ENCODE measurements at regions of chr12 and their contacts with region 1.

Region 1: GRCh38 chr12:93802698-93803423 is 125.7 kb downstream of the CRADD start:
- DNase-seq: no peak
- ATAC-seq: no peak; the same call in 1 of the 2 replicates
- H3K4me3 Mint-ChIP-seq: no peak overlapping the region
- H3K27ac Mint-ChIP-seq: no peak overlapping the region
- H3K4me1 Mint-ChIP-seq: peaks cover 30% of the 10 kb centered on the region
- H3K27me3 Mint-ChIP-seq: no peaks in the 10 kb centered on the region
- CTCF ChIP-seq: no peak

Region 2: GRCh38 chr12:93577222-93577795 is 225.6 kb before region 1 on chr12:
- CTCF ChIA-PET with region 1: no interaction called
- POLR2A ChIA-PET with region 1: no interaction called
- DNase-seq: no peak
- ATAC-seq: no peak
- H3K4me3 Mint-ChIP-seq: no peak overlapping the region
- H3K27ac Mint-ChIP-seq: peak overlapping the region; percentile 40; the same call in 1 of the 2 replicates
- H3K4me1 Mint-ChIP-seq: peaks cover 62% of the 10 kb centered on the region
- H3K27me3 Mint-ChIP-seq: peaks cover 30% of the 10 kb centered on the region
- CTCF ChIP-seq: no peak

Region 3: GRCh38 chr12:93773122-93773871 is 29.6 kb before region 1 on chr12:
- CTCF ChIA-PET with region 1: no interaction called
- POLR2A ChIA-PET with region 1: no interaction called
- DNase-seq: no peak
- ATAC-seq: no peak
- H3K4me3 Mint-ChIP-seq: no peak overlapping the region
- H3K27ac Mint-ChIP-seq: no peak overlapping the region
- H3K4me1 Mint-ChIP-seq: peaks cover 29% of the 10 kb centered on the region
- H3K27me3 Mint-ChIP-seq: no peaks in the 10 kb centered on the region
- CTCF ChIP-seq: no peak

Region 4: GRCh38 chr12:93825931-93826555 is 23.2 kb after region 1 on chr12:
- CTCF ChIA-PET with region 1: no interaction called
- POLR2A ChIA-PET with region 1: no interaction called
- DNase-seq: no peak
- ATAC-seq: no peak
- H3K4me3 Mint-ChIP-seq: no peak overlapping the region
- H3K27ac Mint-ChIP-seq: no peak overlapping the region
- H3K4me1 Mint-ChIP-seq: peaks cover 10% of the 10 kb centered on the region; the same call in 1 of the 2 replicates
- H3K27me3 Mint-ChIP-seq: peaks cover 10% of the 10 kb centered on the region
- CTCF ChIP-seq: no peak

Region 5: DNA sequence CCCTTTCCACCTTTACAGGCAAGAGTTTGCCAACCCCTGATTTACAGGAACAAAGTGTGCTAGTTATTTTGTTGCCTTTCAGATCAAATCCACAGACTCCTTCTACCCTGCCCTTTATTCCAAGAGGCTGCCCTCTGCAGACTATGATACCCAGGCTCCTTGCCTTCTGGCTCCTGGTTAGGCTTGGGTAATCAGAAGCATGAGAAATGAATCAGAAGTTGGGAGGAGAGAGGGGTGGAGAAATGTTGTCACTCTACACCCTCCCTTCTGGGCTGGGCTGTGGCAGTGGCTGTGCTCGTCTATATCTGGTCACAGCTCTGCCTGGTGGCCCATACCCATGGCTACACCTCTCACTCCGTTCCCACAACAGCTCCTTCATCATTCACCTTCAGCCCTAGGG is 140.9 kb after region 1 on chr12:
- CTCF ChIA-PET with region 1: no interaction called
- POLR2A ChIA-PET with region 1: no interaction called
- DNase-seq: no peak
- ATAC-seq: peak; percentile 36; the same call in 1 of the 2 replicates
- H3K4me3 Mint-ChIP-seq: no peak overlapping the region
- H3K27ac Mint-ChIP-seq: no peak overlapping the region
- H3K4me1 Mint-ChIP-seq: peaks cover 15% of the 10 kb centered on the region
- H3K27me3 Mint-ChIP-seq: peaks cover 3% of the 10 kb centered on the region; the same call in 1 of the 2 replicates
- CTCF ChIP-seq: no peak

Region 6: GRCh38 chr12:94133964-94134795 is 331.3 kb after region 1 on chr12:
- CTCF ChIA-PET with region 1: no interaction called
- POLR2A ChIA-PET with region 1: interaction called, 16 read pairs
- DNase-seq: no peak
- ATAC-seq: peak; percentile 78
- H3K4me3 Mint-ChIP-seq: no peak overlapping the region
- H3K27ac Mint-ChIP-seq: no peak overlapping the region
- H3K4me1 Mint-ChIP-seq: no peaks in the 10 kb centered on the region
- H3K27me3 Mint-ChIP-seq: no peaks in the 10 kb centered on the region; the same call in none of the 2 replicates
- CTCF ChIP-seq: peak; percentile 74

Measured in WTC11 (cell line).